ENCODE measurements at regions of chr2 and their contacts with region 1.

Region 1: GRCh38 chr2:80199504-80199903 is 105.0 kb downstream of the LRRTM1 start:
- DNase-seq: no peak
- H3K4me3 ChIP-seq: no peak overlapping the region
- H3K27ac ChIP-seq: no peak overlapping the region
- H3K4me1 ChIP-seq: no peaks in the 10 kb centered on the region
- H3K27me3 ChIP-seq: no peaks in the 10 kb centered on the region
- CTCF ChIP-seq: no peak
- POLR2A ChIP-seq: no peak

Region 2: GRCh38 chr2:79757526-79757925 is 442.0 kb before region 1 on chr2:
- intact Hi-C with region 1: no loop called
- DNase-seq: no peak
- H3K4me3 ChIP-seq: no peak overlapping the region
- H3K27ac ChIP-seq: no peak overlapping the region
- H3K4me1 ChIP-seq: no peaks in the 10 kb centered on the region
- H3K27me3 ChIP-seq: no peaks in the 10 kb centered on the region
- CTCF ChIP-seq: no peak
- POLR2A ChIP-seq: no peak

Region 3: GRCh38 chr2:80187156-80187555 is 12.3 kb before region 1 on chr2:
- intact Hi-C with region 1: loop called (anchors 1 kb)
- DNase-seq: no peak
- H3K4me3 ChIP-seq: no peak overlapping the region
- H3K27ac ChIP-seq: no peak overlapping the region
- H3K4me1 ChIP-seq: no peaks in the 10 kb centered on the region
- H3K27me3 ChIP-seq: no peaks in the 10 kb centered on the region
- CTCF ChIP-seq: no peak
- POLR2A ChIP-seq: no peak

Region 4: GRCh38 chr2:80266231-80266630 is 66.7 kb after region 1 on chr2:
- intact Hi-C with region 1: no loop called
- DNase-seq: no peak
- H3K4me3 ChIP-seq: no peak overlapping the region
- H3K27ac ChIP-seq: no peak overlapping the region
- H3K4me1 ChIP-seq: no peaks in the 10 kb centered on the region
- H3K27me3 ChIP-seq: no peaks in the 10 kb centered on the region
- CTCF ChIP-seq: no peak
- POLR2A ChIP-seq: no peak